BJ (cell line): ENCODE measurements at regions of chr5 and their contacts with region 1.

Region 1: DNA sequence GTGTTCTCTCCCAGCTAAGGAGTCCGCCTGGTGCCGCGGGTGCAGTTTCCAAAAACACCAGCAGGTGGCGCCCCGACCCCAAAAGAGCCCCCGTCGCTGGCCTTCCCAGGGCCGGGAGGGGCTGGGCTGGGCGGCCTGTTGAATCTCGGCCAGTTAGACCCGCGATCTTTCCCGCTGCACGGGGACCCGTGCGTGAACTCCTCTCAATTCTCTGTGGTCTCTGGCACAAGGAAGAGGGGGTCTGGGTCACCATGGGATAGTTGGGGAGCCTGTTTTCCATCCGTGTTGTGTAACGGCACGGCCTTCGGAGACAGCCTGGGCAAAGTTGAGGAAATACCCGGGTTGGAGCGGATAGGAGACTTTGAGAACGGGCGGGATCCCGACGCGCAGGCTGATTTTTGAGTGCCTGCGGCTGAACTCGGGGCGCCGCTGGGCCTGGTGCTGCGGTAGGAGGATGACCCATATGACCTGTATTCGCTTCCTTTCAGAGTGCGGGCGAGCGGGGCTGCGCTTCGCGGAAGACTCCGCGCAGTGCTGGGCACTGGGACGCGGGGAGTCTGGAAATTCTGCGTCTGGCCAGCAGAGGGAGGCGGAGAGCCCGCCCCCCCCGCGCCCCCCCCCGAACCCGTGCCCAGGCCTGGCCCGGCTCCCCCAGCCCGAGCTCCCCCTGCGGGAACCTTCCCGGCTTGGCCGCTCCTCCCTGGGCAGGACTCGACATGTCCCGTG is 7.9 kb upstream of the PSD2 start:
- DNase-seq: peak; percentile 9
- H3K4me3 ChIP-seq: peak overlapping the region; percentile 45
- H3K27me3 ChIP-seq: peaks cover 5% of the 10 kb centered on the region
- CTCF ChIP-seq: peak; percentile 98

Region 2: GRCh38 chr5:139774980-139775661 is 12.6 kb before region 1 on chr5:
- CTCF ChIA-PET with region 1: interaction called, 65 read pairs
- POLR2A ChIA-PET with region 1: no interaction called
- DNase-seq: no peak
- H3K4me3 ChIP-seq: no peak overlapping the region
- H3K27me3 ChIP-seq: peaks cover 13% of the 10 kb centered on the region
- CTCF ChIP-seq: peak; percentile 95

Region 3: GRCh38 chr5:139837631-139838422 is 50.1 kb after region 1 on chr5:
- CTCF ChIA-PET with region 1: interaction called, 64 read pairs
- POLR2A ChIA-PET with region 1: no interaction called
- DNase-seq: no peak
- H3K4me3 ChIP-seq: no peak overlapping the region
- H3K27me3 ChIP-seq: peaks cover 5% of the 10 kb centered on the region
- CTCF ChIP-seq: no peak

Region 4: DNA sequence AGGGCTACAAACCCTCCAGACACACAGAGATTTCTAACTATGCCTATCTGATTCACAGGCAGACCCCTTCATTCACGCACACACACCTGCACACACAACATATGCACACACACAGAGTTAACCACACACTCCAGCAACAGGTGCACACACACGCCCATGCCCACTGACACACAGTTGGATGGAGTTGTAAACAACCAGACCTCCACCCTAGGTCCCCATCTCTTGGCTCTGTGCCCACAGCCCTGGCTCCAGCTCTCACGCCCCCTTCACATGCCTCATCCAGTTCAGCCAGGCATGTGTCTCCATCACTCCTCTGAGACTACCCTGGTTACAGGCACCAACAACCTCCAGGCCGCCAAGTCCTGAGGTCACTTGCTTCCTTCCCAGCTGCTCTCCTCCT is 69.0 kb after region 1 on chr5:
- CTCF ChIA-PET with region 1: interaction called, 54 read pairs
- POLR2A ChIA-PET with region 1: no interaction called
- DNase-seq: no peak
- H3K4me3 ChIP-seq: no peak overlapping the region
- H3K27me3 ChIP-seq: peaks cover 6% of the 10 kb centered on the region; the same call in 1 of the 2 replicates
- CTCF ChIP-seq: no peak

Region 5: DNA sequence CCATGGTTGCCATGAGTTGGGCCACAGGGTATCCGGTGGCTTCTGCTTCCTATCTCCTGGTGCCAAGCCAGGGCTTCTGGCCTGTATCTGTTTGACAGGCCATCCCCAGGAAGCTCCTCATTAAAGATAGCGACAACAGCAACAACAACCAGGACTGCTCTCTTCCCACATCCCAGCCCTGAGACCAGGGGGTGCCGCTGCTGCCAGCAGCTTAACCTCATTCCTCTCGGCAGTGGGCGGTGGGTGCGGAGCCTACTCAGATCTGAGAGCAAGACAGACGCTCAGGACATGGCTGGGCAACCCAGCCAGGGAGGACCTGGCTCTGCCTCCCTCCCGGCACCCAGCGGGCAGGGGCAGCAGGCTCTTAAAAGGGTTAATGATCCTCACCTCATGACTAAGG is 106.1 kb after region 1 on chr5:
- CTCF ChIA-PET with region 1: no interaction called
- POLR2A ChIA-PET with region 1: no interaction called
- DNase-seq: no peak
- H3K4me3 ChIP-seq: no peak overlapping the region
- H3K27me3 ChIP-seq: peaks cover 13% of the 10 kb centered on the region
- CTCF ChIP-seq: no peak

Region 6: DNA sequence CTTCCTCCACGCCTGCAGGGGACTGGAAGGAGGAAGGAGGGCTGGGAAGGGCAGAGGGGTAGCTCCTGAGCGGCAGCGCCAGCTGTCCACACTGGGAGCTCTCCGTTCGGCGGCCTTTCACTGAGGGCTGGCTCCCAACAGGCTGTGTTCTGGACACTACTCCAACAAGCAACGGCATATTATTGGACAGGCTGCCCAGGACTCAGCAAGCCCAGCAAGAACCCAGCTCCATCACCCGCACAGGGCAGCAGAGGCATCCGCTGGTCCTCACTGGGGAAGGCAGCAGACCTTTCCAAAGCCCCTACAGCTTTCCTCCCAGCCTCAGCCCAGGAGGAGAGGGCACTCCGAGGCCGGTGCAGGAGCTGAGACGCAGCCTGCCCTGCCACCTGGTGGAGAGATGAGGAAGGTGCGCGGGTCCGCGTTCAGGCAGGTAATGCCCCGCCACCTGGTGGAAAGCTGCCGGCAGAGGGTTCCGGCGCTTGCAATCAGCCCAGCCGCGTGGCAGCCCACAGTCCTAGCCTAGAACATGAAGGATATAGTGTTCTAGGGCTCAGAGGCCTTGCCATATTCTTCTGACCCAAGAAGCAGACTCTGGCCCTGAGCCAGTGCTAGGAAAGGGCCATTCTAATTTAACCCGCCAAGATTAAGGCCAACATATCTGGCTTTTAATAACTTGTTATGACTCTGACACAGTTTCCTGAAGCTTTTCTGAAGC is 181.0 kb after region 1 on chr5:
- CTCF ChIA-PET with region 1: interaction called, 123 read pairs
- POLR2A ChIA-PET with region 1: no interaction called
- DNase-seq: no peak
- H3K4me3 ChIP-seq: no peak overlapping the region
- H3K27me3 ChIP-seq: peaks cover 16% of the 10 kb centered on the region
- CTCF ChIP-seq: peak; percentile 99

Region 7: GRCh38 chr5:140035881-140036280 is 248.2 kb after region 1 on chr5:
- CTCF ChIA-PET with region 1: no interaction called
- POLR2A ChIA-PET with region 1: no interaction called
- DNase-seq: no peak
- H3K4me3 ChIP-seq: no peak overlapping the region
- H3K27me3 ChIP-seq: peaks cover 4% of the 10 kb centered on the region
- CTCF ChIP-seq: no peak

Region 8: DNA sequence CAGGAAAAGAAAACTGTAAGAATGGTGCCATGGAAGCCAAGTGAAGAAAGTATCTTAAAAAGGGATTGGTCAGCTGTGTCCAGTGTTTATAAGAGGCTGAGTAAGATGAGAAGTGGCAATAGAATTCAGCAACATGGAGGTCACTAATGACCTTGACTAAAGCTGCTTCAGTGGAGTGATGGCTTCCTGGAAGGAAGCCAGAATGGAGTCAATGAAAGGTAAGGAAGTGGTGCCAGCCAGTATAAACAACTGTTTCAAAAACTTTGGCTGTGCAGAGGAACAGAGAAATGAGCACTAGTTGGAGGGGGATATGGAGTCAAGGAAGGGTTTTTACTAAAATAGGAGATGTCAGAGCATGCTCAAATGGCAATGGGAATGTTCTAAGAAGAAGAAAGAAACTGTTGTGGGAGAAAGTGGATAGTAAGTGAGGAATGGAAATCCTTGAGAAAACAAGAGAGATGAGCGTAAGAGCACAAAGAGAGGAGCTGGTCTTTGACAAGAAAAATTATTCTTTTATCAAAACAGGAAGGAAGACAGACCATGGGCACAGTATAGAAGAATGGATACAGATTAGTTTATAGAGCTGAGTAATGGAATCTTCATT is 266.5 kb after region 1 on chr5:
- CTCF ChIA-PET with region 1: no interaction called
- POLR2A ChIA-PET with region 1: no interaction called
- DNase-seq: no peak
- H3K4me3 ChIP-seq: no peak overlapping the region
- H3K27me3 ChIP-seq: peaks cover 14% of the 10 kb centered on the region
- CTCF ChIP-seq: no peak

Region 9: GRCh38 chr5:140165101-140165922 is 377.6 kb after region 1 on chr5:
- CTCF ChIA-PET with region 1: no interaction called
- POLR2A ChIA-PET with region 1: no interaction called
- DNase-seq: no peak
- H3K4me3 ChIP-seq: no peak overlapping the region
- H3K27me3 ChIP-seq: no peaks in the 10 kb centered on the region
- CTCF ChIP-seq: no peak